CD14-positive monocyte (primary cell): ENCODE measurements at regions of chr3 and their contacts with region 1.

Region 1: DNA sequence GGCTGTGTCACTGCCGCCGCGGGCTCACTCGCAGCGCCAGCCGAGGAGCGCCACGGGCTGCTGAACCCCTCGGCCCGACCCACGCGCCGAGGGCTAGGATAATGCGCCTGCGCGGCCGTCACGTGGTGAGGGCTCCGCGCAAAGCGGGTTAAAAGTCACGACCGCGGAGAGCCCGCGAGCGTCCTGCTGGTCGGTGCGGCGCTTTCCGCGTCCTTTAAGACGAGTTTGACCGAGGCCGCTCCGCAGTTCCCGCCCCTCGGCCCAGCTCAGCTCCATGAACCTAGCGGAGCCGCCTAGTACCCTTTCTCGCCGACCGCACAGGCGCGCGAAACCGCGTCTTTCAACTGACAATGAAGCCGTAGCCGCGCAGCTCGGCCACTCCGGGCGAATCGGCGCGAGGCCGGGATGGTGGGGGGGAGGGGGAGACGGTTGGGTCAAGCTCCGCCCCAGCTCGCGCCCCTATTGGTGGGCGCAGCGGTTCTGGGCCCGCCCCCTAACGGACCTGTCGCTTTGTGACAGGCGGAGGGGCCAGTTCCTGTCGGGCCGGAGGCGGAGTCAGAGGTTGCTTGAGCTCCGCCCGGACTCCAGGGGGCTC is 636 bp upstream of the STT3B start:
- DNase-seq: peak; percentile 98 to 99 (median 99)
- H3K4me3 ChIP-seq: peak overlapping the region; percentile 96 to 99 (median 97)
- H3K4me3 Mint-ChIP-seq: peak overlapping the region; percentile 97 to 99
- H3K27ac ChIP-seq: peak overlapping the region; percentile 91 to 97
- H3K27ac Mint-ChIP-seq: peak overlapping the region; percentile 98 to 100 (median 99)
- H3K4me1 ChIP-seq: peaks cover 46 to 59% of the 10 kb centered on the region in 2 donors
- H3K4me1 Mint-ChIP-seq: peaks cover 24% of the 10 kb centered on the region
- H3K27me3 ChIP-seq: no peaks in the 10 kb centered on the region
- H3K27me3 Mint-ChIP-seq: no peaks in the 10 kb centered on the region
- CTCF ChIP-seq: no peak

Region 2: DNA sequence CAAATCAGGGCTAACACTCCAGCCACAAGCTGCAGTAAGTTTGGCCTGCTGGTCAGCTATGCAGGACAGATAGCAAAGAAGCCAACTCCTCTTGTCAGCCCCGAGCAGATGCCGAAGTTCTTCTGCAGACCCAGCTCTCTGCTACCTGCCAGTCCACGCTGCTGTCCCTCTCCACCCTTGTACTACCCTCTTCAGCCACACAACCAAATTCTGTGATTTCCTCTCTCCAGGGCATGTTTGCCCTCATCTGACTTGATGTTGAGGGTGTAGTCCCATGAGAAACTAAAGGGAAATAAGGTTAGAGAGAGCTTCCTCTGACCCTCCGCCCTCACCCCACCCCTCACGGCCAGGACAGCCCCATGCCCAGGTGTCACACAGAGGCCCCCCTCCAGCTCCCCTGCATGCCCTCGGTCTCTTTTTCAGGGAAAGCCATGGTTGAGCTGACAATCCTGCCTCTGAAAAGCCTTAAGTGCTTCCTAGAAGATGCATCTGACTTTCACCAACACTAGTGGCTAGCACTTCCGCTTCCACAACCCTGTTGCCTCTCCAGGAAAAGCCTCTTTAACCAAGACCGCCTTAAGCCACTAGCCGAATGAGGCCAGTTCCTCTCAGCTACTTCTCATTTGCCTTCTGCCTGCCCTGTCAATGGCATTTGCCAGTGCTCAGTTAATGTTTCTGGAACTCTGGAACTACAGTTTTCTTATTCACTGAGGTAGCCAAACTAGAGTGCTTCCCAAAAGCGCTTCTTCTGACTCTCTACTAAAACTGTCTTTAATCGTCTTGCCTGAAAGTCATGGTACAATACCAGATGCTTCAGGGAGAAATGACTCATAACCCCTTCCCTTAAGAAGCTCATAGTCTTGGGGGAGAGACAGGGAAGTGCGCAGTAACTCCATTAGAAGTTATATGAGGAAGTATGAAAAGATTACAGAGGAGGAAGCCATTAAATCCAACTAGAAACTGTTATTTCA is 299.7 kb before region 1 on chr3:
- intact Hi-C with region 1: loop called (anchors 10 kb)
- DNase-seq: peak; percentile 88 to 96 (median 95)
- H3K4me3 ChIP-seq: peak overlapping the region in 1 of 3 experiments; percentile 45
- H3K4me3 Mint-ChIP-seq: peak overlapping the region; percentile 52 to 82
- H3K27ac ChIP-seq: peak overlapping the region; percentile 91 to 95
- H3K27ac Mint-ChIP-seq: peak overlapping the region; percentile 94 to 99 (median 98)
- H3K4me1 ChIP-seq: peaks cover 68 to 78% of the 10 kb centered on the region in 2 donors
- H3K4me1 Mint-ChIP-seq: peaks cover 67% of the 10 kb centered on the region
- H3K27me3 ChIP-seq: no peaks in the 10 kb centered on the region
- H3K27me3 Mint-ChIP-seq: peaks cover 0 to 5% (median 0%) of the 10 kb centered on the region in 3 donors
- CTCF ChIP-seq: peak; percentile 14

Region 3: DNA sequence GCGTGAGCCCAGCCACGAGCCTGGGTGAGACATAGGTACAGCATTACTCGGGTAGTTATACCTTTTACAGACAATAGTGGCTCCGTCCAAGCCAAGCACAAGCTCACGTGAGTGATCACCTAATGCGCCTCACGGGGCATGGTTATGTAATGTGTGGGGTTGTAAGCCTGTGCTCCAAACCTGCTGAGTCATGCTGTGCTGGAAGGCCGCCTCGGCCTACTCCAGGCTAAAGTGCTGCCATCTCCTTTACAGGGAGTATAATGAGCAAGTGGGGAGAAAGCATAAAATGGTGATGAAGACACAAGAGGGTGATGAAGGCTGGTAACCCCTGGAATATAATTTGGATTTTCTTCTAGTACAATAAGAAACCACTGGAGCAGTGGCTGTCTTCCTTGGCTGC is 175.1 kb before region 1 on chr3:
- intact Hi-C with region 1: no loop called
- DNase-seq: peak; percentile 6 to 42 (median 14)
- H3K4me3 ChIP-seq: no peak overlapping the region
- H3K4me3 Mint-ChIP-seq: no peak overlapping the region
- H3K27ac ChIP-seq: no peak overlapping the region
- H3K27ac Mint-ChIP-seq: no peak overlapping the region
- H3K4me1 ChIP-seq: no peaks in the 10 kb centered on the region
- H3K4me1 Mint-ChIP-seq: peaks cover 3% of the 10 kb centered on the region
- H3K27me3 ChIP-seq: no peaks in the 10 kb centered on the region
- H3K27me3 Mint-ChIP-seq: no peaks in the 10 kb centered on the region
- CTCF ChIP-seq: no peak

Region 4: GRCh38 chr3:31377045-31377642 is 154.9 kb before region 1 on chr3:
- intact Hi-C with region 1: no loop called
- DNase-seq: no peak
- H3K4me3 ChIP-seq: no peak overlapping the region
- H3K4me3 Mint-ChIP-seq: no peak overlapping the region
- H3K27ac ChIP-seq: no peak overlapping the region
- H3K27ac Mint-ChIP-seq: no peak overlapping the region
- H3K4me1 ChIP-seq: no peaks in the 10 kb centered on the region
- H3K4me1 Mint-ChIP-seq: no peaks in the 10 kb centered on the region
- H3K27me3 ChIP-seq: no peaks in the 10 kb centered on the region
- H3K27me3 Mint-ChIP-seq: no peaks in the 10 kb centered on the region
- CTCF ChIP-seq: no peak